ENCODE measurements at regions of chr1 and their contacts with region 1.

Region 1: GRCh38 chr1:237032029-237032428 is 10.0 kb upstream of the RYR2 start:
- DNase-seq: no peak
- H3K4me3 ChIP-seq: no peak overlapping the region
- H3K27ac ChIP-seq: no peak overlapping the region
- H3K4me1 ChIP-seq: no peaks in the 10 kb centered on the region
- H3K27me3 ChIP-seq: no peaks in the 10 kb centered on the region
- CTCF ChIP-seq: no peak
- POLR2A ChIP-seq: no peak

Region 2: GRCh38 chr1:236673289-236673919 is 358.6 kb before region 1 on chr1:
- intact Hi-C with region 1: no loop called
- DNase-seq: no peak
- H3K4me3 ChIP-seq: no peak overlapping the region
- H3K27ac ChIP-seq: no peak overlapping the region
- H3K4me1 ChIP-seq: no peaks in the 10 kb centered on the region
- H3K27me3 ChIP-seq: no peaks in the 10 kb centered on the region
- CTCF ChIP-seq: no peak
- POLR2A ChIP-seq: no peak

Region 3: GRCh38 chr1:237258871-237259270 is 226.8 kb after region 1 on chr1:
- intact Hi-C with region 1: no loop called
- DNase-seq: peak; percentile 60 to 68
- H3K4me3 ChIP-seq: no peak overlapping the region
- H3K27ac ChIP-seq: no peak overlapping the region
- H3K4me1 ChIP-seq: peaks cover 6 to 13% of the 10 kb centered on the region in 2 donors
- H3K27me3 ChIP-seq: no peaks in the 10 kb centered on the region
- CTCF ChIP-seq: no peak
- POLR2A ChIP-seq: no peak

Region 4: GRCh38 chr1:237386362-237387143 is 354.5 kb after region 1 on chr1:
- intact Hi-C with region 1: loop called (anchors 10 kb)
- DNase-seq: no peak
- H3K4me3 ChIP-seq: no peak overlapping the region
- H3K27ac ChIP-seq: no peak overlapping the region
- H3K4me1 ChIP-seq: no peaks in the 10 kb centered on the region
- H3K27me3 ChIP-seq: no peaks in the 10 kb centered on the region
- CTCF ChIP-seq: peak in 5 of 6 experiments; percentile 37 to 83 (median 71)
- POLR2A ChIP-seq: no peak

Region 5: DNA sequence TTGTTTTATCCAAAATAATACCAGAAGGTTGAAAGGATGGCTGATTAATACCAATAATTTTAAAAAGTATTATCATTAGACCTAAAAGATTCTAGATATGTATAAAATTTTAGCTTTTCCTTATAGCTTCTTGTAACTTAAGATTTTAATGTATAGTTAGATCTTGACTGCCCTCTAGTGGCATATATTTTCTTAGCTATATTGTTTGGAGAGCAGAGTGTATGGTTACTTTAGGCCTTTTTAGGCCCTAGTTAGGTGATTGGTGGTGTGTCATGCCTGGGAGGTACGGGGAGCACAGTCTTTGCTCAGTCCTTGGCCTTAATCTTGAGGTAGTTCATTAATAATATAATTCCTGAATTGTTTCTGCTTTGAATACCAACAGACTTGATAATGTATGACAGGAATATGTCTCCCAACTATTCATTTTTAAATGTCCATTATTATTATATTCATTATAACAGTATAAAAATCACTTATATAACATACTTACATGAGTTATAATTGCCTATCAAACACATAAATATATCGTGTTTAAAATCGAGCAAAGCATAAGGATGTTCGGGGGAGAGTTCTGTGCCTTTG is 530.3 kb after region 1 on chr1:
- intact Hi-C with region 1: loop called (anchors 10 kb)
- DNase-seq: no peak
- H3K4me3 ChIP-seq: no peak overlapping the region
- H3K27ac ChIP-seq: no peak overlapping the region
- H3K4me1 ChIP-seq: no peaks in the 10 kb centered on the region
- H3K27me3 ChIP-seq: no peaks in the 10 kb centered on the region
- CTCF ChIP-seq: peak; percentile 19 to 65 (median 48)
- POLR2A ChIP-seq: no peak

Measured in thyroid gland (tissue), 4 donors.